Sigmoid colon (tissue), 7 donors: ENCODE measurements at regions of chr16 and their contacts with region 1.

Region 1: GRCh38 chr16:49491771-49492761 is 118.5 kb downstream of the C16orf78 start:
- DNase-seq: peak; percentile 77
- H3K4me3 ChIP-seq: peak overlapping the region in 3 of 4 donors; percentile 29 to 42 (median 39)
- H3K27ac ChIP-seq: no peak overlapping the region
- H3K4me1 ChIP-seq: peaks cover 0 to 11% (median 8%) of the 10 kb centered on the region in 4 donors
- H3K27me3 ChIP-seq: no peaks in the 10 kb centered on the region
- CTCF ChIP-seq: peak; percentile 59 to 98 (median 76)
- EP300 ChIP-seq: no peak
- POLR2A ChIP-seq: no peak

Region 2: DNA sequence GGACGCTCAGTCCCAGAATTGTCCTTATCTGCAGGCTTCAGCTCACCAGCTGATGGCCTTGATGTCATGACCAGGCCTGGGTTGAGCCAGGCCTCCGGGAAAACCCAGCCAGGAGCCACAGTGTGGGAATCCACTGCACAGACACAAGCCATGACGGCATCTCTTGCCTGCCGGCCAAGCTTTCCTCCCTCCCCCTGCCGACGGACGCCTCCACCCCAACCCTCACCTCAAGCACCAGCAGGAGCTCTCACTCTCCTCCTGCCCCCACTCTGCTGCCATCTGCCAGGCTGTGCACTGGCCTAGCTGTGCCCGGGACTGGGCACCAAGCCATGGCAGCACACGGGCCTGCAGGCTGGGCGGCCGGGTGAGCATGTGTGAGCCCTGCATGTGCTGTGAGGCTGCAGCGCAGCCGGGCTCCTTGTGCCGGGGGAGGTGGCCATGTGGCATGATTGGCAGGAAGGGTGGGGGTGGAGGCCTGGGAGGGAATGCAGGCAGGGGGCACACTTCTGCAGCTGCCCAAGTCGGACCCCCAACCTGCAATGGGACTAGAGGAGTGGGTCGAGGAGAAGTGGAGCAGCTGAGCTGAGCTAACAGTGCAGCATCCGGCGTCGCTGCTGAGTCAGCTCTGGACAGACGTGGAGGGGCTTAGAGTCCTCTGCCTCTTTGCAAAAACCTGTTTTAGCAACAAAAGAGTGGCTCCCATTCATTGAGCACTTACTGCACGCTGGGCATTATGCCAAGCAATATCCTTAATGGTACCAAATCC is 478.9 kb before region 1 on chr16:
- intact Hi-C with region 1: no loop called
- DNase-seq: peak; percentile 92
- H3K4me3 ChIP-seq: no peak overlapping the region
- H3K27ac ChIP-seq: peak overlapping the region in 3 of 4 donors; percentile 59 to 78 (median 70)
- H3K4me1 ChIP-seq: peaks cover 0 to 50% (median 29%) of the 10 kb centered on the region in 4 donors
- H3K27me3 ChIP-seq: no peaks in the 10 kb centered on the region
- CTCF ChIP-seq: no peak
- EP300 ChIP-seq: peak in 2 of 4 donors; percentile 25 to 44
- POLR2A ChIP-seq: no peak

Region 3: DNA sequence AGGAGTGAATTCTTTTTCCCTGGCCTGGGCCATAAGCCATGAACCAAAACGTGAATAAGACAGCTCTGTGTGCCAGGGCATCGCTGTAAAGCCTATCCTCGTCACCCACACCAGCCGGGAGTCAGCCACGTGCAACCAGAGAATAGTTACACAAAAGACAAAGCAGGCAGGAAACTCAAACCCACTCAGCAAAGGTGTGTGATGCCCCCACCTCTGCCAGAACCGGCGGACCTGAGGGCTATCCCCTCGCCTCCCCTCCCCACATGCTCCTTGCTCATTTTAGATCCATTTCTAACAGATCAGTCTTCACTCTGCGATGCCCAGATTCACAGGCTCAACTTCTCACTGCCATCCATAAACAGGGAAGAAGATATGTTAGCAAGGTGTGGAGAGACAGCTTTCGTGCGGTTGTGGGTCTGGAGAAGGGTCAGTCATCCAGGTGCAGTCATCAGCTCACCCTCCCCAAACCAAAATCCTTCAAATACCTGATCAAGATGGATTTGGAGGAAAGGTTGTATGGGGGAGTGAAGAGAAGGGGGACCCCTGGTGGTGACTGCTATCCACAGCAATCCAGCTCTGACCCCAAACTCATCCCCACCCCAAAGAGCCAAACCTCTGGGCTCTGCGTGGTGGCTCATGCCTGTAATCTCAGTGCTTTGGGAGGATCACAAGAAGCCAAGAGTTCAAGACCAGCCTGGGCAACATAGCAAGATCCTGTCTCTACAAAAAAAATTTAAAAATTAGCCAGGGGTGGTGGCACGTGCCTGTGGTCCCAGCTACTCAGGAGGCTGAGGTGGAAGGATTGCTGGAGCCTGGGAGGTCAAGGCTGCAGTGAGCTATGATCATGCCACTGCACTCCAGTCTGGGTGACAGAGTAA is 100.7 kb after region 1 on chr16:
- intact Hi-C with region 1: loop called (anchors 5 kb)
- DNase-seq: no peak
- H3K4me3 ChIP-seq: no peak overlapping the region
- H3K27ac ChIP-seq: no peak overlapping the region
- H3K4me1 ChIP-seq: peaks cover 0 to 21% (median 11%) of the 10 kb centered on the region in 4 donors
- H3K27me3 ChIP-seq: no peaks in the 10 kb centered on the region
- CTCF ChIP-seq: peak in 3 of 4 experiments; percentile 55 to 73 (median 71)
- EP300 ChIP-seq: no peak
- POLR2A ChIP-seq: no peak

Region 4: GRCh38 chr16:49725651-49726050 is 233.6 kb after region 1 on chr16:
- intact Hi-C with region 1: no loop called
- DNase-seq: no peak
- H3K4me3 ChIP-seq: no peak overlapping the region
- H3K27ac ChIP-seq: no peak overlapping the region
- H3K4me1 ChIP-seq: peaks cover 0 to 11% (median 6%) of the 10 kb centered on the region in 4 donors
- H3K27me3 ChIP-seq: no peaks in the 10 kb centered on the region
- CTCF ChIP-seq: no peak
- EP300 ChIP-seq: no peak
- POLR2A ChIP-seq: no peak

Region 5: GRCh38 chr16:49755313-49755620 is 263.2 kb after region 1 on chr16:
- intact Hi-C with region 1: loop called (anchors 2 kb)
- DNase-seq: no peak
- H3K4me3 ChIP-seq: peak overlapping the region in 3 of 4 donors; percentile 45 to 55 (median 47)
- H3K27ac ChIP-seq: peak overlapping the region; percentile 38 to 69 (median 58)
- H3K4me1 ChIP-seq: peaks cover 0 to 22% (median 21%) of the 10 kb centered on the region in 4 donors
- H3K27me3 ChIP-seq: no peaks in the 10 kb centered on the region
- CTCF ChIP-seq: peak in 1 of 4 experiments; percentile 34
- EP300 ChIP-seq: no peak
- POLR2A ChIP-seq: no peak

Region 6: GRCh38 chr16:49855280-49855821 is 363.3 kb after region 1 on chr16:
- intact Hi-C with region 1: loop called (anchors 5 kb)
- DNase-seq: peak; percentile 94
- H3K4me3 ChIP-seq: peak overlapping the region; percentile 65 to 84 (median 82)
- H3K27ac ChIP-seq: peak overlapping the region; percentile 89 to 96 (median 92)
- H3K4me1 ChIP-seq: peaks cover 0 to 45% (median 34%) of the 10 kb centered on the region in 4 donors
- H3K27me3 ChIP-seq: peaks cover 0 to 20% (median 8%) of the 10 kb centered on the region in 3 donors
- CTCF ChIP-seq: no peak
- EP300 ChIP-seq: no peak
- POLR2A ChIP-seq: peak in 1 of 2 donors; percentile 21

Region 7: DNA sequence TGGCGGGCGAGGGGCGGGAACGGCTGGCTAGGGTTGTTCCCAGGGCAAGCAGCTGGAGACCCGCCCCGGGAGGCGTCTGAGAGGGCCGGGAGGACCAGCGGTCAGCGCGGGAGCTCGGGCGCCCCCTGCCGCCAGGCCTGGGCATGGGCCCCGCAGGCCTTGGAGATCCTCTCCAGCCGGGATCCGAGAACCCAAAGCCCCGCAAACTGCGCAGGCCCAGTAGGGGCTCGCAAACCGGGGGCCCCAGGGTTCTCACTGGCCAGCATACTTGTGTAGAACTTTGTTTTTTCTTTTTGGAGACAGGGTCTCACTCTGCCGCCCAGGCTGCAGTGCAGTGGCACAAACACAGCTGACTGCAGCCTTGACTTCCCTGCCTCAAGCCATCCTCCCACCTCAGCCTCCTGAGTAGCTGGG is 384.7 kb after region 1 on chr16:
- intact Hi-C with region 1: loop called (anchors 5 kb)
- DNase-seq: peak; percentile 84
- H3K4me3 ChIP-seq: peak overlapping the region; percentile 22 to 49 (median 42)
- H3K27ac ChIP-seq: peak overlapping the region in 3 of 4 donors; percentile 30 to 42 (median 42)
- H3K4me1 ChIP-seq: peaks cover 0 to 11% (median 9%) of the 10 kb centered on the region in 4 donors
- H3K27me3 ChIP-seq: peaks cover 0 to 14% (median 9%) of the 10 kb centered on the region in 3 donors
- CTCF ChIP-seq: peak; percentile 47 to 94 (median 72)
- EP300 ChIP-seq: no peak
- POLR2A ChIP-seq: no peak

Region 8: DNA sequence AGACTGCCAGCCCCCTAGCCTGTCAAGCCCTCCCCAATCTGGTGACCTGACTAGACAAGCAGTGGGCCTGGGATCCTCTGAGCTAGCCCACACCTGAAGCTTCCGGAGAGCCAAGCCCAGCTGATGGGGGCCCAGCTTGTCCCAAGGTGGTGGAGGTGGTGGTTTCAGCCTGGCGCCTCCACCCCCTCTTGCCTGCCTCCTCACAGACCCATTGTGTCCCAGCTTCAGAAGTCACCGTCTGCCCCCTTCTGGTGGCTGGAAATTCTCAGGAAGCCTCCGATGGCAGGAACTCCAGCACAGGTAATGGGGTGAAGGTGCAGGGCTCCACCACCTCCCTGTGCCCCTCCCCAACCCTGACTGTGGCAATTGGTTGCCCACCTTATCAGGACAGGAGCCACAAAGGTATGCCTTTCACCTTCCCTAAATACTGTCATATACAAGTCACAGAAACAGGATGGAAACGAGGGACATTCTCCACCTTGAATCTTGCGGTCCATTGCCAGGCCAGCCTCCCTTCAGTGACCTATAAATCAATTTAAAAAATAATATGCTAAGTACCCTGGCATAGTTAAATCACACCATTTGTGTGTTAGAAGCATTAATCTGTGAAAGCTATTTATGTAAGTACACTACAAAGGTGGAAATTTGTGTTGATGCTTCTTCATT is 429.9 kb after region 1 on chr16:
- intact Hi-C with region 1: loop called (anchors 5 kb)
- DNase-seq: peak; percentile 72
- H3K4me3 ChIP-seq: no peak overlapping the region
- H3K27ac ChIP-seq: no peak overlapping the region
- H3K4me1 ChIP-seq: no peaks in the 10 kb centered on the region
- H3K27me3 ChIP-seq: no peaks in the 10 kb centered on the region
- CTCF ChIP-seq: peak; percentile 14 to 54 (median 40)
- EP300 ChIP-seq: no peak
- POLR2A ChIP-seq: no peak